Cardiac septum (tissue), 1 donor: ENCODE measurements at regions of chr1 and their contacts with region 1.

Region 1: DNA sequence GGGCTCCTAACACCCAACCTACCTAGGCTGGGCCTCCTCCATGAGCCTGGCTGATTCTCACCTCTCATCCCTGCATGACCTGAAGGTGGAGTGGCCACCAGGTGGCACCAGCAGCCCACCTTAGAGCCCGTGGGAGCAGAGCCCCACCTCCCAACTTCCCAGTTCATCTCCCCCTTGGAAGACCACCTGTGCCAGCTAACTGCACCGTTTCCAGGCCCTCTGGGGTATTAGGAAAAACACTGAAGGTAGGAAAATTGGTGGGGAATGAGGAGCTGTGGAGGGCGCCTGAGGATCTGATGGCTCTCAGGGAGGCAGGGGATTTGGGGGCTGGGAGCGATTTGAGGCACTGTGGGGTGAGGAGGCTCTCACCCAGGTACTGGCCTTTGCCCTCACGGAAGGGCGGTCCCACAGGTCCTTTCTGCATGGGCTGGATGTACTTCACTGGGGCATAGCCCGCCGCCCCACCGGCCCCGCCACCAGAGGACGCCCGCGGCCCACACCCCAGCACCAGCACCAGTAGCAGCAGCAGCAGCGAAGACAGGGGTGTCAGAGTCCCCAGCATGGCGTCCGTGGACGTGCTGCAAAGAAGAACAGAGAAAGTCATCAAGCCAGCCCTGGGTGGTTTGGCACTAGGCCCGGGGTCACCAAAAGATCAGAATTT is 11.1 kb downstream of the ADPRS start:
- DNase-seq: peak; percentile 88

Region 2: DNA sequence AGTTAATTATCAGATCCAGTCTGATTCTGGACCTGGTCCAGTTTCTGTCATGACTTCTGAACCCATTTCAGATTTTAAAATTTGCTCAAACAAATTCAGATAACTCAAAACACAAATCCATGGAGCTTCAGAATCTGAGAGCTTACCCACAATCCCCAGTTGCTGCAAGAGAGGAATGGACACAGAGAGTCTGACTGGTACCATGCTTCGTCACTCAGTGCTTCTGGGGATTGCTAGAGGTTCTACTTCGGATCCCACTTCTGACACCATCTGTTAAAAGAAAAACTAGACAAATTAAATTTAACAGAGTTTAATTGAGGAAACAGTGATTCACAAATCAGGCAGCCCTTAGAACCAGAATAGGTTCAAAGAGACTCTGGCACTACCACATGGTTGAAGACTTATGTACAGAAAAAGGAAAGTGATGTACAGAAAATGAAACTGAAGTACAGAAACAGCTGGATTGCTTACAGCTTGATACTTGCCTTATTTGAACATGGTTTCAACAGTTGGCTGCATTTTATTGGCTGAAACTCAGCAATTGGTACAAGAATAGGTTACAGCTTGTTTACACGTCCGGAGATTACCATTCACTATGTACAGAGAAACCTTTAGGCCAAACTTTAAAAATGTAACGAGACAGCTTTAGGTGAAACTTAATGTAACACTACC is 76.6 kb before region 1 on chr1:
- intact Hi-C with region 1: no loop called
- DNase-seq: no peak

Region 3: DNA sequence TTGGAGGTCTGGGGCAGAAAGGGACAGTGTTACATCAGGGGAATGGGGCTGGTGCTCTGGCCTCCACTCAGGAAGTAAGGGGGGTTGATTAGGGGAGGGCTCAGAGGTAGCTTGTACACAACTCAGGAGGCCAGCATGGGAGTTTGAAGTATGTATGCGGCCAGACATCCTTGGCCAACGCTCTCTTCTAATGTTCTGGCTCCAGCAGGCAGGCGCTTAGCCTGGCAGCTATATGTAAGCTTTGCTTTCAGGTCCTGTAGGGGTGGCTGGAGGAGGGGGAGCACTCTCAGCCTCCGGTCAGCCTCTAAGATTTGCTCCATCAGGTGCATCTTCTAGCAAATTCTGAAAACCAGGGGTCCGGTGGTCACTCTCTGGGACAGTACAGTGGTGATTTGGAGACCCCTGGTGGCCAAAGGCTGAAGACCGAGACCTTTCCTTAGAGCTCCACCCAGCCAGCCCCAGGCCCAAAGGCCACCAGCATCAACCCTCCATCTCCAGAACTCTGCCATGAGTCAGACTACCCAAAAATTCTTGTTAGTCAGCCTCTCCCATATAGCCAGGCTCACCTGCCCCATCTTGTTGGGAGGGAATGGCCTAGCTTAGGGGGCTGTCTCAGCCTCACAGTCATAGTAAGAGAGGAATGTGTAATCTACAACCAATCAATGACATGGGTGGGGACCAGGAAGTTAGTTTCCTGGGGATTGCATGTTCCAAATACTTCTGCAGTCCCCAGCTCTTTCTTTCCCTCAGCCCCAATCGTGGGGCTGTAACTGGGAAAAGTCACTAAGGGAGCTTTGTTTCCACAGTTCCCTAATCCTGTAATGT is 34.9 kb after region 1 on chr1:
- intact Hi-C with region 1: loop called (anchors 2 kb)
- DNase-seq: no peak

Region 4: GRCh38 chr1:36160949-36161485 is 61.2 kb after region 1 on chr1:
- intact Hi-C with region 1: no loop called
- DNase-seq: peak; percentile 84

Region 5: GRCh38 chr1:36187800-36188593 is 88.2 kb after region 1 on chr1:
- intact Hi-C with region 1: loop called (anchors 2 kb)
- DNase-seq: peak; percentile 93

Region 6: GRCh38 chr1:36217670-36218069 is 117.9 kb after region 1 on chr1:
- intact Hi-C with region 1: loop called (anchors 5 kb)
- DNase-seq: no peak

Region 7: DNA sequence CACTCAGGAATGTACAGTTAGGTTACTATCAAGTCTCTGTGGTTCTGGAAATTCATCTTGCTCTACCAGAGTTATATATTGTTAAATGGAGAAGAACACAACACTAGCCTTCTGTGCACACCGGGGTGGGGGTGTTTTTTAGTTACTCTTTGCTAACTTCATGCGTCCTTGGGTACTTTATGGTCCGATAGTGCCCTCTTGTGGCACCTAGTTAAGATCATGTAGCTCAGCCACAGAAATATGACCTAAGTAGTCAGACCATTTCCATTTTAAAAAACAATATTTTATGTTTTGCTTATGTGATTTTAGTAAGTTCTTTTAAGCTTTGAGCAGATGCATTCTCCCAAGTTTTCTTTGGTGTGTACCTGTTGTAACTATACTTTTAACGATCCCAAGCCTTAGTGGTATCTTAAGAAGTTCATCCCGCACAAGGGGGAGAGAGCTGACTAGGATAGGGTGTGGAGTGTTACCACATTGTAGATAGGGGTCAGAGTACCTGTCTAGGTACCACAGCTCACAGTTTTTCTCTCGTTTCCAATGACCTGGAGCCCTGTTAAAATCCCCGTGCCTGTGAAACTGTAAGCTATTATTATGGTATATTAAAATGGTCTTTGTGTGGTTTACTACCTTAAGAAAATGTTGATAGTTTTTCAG is 185.8 kb after region 1 on chr1:
- intact Hi-C with region 1: loop called (anchors 5 kb)
- DNase-seq: no peak

Region 8: DNA sequence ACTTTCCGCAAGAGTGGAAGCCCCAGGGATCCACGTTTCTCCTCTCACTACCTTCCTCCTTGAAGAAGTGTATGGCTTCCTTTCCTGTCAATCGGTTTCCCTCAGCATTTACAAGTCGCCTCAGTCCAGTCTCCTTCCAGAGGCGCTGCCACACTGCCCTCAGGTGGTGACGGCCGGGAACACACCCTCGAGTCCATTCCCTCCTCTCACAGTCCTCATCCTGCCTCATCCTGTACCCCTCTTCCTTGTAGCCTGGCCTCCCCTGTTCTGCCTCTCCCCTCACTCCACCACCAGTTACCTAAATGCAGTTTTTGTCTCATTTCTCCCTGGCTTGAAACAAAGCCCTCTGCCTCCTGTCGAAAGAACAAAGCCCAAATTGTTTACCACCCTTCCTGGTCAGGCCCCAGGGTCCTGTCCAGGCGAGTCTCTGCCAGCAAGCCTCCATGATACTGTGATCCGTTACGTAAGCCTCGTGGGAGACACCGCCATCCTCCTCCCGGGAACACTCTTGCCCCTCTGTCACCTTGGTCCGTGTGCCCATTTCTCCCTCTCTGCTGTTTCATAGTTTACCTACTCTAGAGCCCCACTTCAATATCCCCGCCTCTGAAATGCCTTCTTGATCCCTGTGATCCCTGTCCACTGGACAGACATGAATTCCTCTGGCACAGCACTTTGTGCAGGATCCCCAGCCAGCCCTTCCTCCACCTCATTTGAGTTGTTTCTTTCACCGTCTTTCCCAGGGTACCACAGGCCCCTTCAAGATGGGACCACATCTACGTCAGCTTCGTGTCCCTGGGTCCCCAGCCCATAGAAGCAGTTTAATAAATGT is 321.2 kb after region 1 on chr1:
- intact Hi-C with region 1: loop called (anchors 2 kb)
- DNase-seq: peak; percentile 95